ENCODE measurements at regions of chr1 and their contacts with region 1.

Region 1: DNA sequence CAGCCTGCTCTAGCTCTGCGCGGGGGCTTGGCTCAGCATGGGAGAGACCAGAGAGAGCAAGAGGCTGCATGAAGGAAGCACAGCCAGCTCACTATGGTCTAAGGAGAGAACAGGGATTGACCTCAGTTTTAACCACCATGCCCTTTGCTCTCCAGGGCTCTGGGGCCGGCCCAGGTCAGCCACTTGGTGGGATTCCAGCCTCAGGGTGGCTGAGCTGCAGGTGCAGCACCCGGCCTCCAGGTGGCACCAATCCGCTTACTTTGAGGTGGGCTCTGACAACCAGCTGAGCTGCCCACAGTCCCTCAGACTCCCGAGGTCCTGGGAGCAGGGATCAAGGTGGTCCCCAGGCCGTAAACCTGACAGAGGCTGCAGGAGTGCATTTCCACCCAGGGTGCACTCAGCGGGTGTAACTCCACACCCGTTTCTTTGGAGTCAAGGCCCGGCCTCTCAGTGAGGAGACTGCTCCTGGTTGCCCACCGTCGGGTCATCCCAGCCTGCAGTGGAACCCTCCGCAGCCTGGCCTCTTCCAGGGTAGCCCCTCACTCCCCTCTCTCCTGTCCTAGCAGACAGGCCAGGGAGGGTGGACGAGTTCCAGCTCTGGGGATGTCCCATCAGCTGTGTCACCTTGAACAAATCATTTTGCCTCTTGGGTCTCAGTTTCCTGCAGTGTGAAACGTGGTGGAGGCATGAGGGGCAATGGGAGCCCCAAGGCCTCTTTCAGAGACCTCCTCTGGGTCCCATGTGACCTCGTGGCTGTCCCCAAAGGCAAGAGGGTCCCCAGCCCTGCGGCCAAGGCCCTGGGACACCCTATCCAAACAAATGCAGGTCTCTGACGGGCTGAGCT is 607 bp upstream of the LGR6 start:
- DNase-seq: peak; percentile 69
- ATAC-seq: peak; percentile 54
- H3K4me3 Mint-ChIP-seq: no peak overlapping the region
- H3K27ac Mint-ChIP-seq: no peak overlapping the region
- H3K4me1 Mint-ChIP-seq: peaks cover 3% of the 10 kb centered on the region
- H3K27me3 Mint-ChIP-seq: peaks cover 33% of the 10 kb centered on the region

Region 2: DNA sequence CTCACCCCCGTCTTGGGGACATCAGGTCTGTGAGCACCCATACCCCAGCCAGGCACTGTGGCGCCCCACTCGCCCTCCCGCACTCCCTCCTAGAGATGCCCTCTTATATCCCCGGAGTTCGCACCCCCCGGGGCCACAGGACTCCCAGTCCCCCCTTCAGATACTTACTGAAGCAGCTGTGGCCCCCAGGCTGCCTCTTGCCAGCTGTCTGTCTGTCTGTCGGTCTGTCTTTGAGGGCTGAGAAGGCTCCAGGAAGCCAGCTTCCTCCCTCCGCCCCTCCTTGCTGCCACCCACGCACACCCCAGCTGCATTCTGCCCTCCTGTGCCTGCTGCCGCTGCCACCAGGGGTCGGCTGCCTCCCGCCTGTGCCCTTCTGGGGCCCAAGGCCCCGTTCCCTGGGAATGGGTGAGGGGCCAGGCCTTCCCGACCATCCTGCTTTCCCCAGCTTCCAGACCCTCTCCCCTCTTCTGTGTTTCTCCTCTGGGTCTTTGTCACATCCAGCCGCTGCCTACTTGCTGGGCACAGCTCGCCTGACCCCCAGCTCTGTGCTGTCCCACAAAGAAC is 32.5 kb before region 1 on chr1 and contains the start of gene PTPN7:
- CTCF ChIA-PET with region 1: interaction called, 28 read pairs
- DNase-seq: peak; percentile 87
- ATAC-seq: peak; percentile 38
- H3K4me3 Mint-ChIP-seq: peak within 1 kb of the TSS; percentile 98
- H3K27ac Mint-ChIP-seq: peak within 1 kb of the TSS; percentile 99
- H3K4me1 Mint-ChIP-seq: peaks cover 76% of the 10 kb centered on the region
- H3K27me3 Mint-ChIP-seq: no peaks in the 10 kb centered on the region
- total RNA-seq, gene PTPN7: 228 to 410 TPM

Region 3: DNA sequence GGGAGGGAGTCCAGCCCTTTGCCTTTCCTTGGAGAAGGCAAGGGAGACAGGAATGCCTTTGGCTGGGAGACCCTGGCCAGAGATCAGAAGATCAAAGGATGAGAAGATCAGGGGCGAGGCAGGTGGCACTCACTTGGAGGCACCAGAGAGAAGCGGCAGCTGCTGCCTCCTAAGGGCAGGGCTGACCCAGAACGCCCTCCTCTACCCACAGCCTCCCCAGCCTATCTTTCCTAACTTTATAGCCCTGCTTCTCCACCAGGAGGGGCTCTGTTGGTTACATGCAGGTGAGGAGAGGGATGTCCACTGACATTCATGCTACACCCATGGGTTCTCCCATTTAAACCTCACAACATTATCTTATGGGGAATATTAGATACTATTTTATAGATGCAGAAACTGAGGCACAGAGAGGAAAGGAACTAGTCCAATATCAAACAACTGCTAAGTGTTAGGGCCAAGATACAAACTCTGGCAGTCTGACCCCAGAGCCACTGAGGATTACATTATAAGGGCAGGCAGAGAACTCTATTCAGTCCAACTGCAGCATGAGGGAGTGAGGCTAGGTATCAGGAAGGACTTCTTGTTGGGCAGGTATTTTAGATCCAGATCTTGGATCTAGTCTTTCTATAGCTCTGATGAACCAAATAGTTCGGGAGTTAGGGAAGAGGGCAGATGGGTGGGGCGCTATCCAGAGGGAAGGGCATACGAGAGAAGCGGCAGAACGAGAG is 20.5 kb after region 1 on chr1:
- CTCF ChIA-PET with region 1: interaction called, 15 read pairs
- DNase-seq: no peak
- ATAC-seq: no peak
- H3K4me3 Mint-ChIP-seq: no peak overlapping the region
- H3K27ac Mint-ChIP-seq: no peak overlapping the region
- H3K4me1 Mint-ChIP-seq: peaks cover 5% of the 10 kb centered on the region
- H3K27me3 Mint-ChIP-seq: peaks cover 66% of the 10 kb centered on the region

Region 4: GRCh38 chr1:202274611-202275010 is 81.6 kb after region 1 on chr1:
- CTCF ChIA-PET with region 1: interaction called, 20 read pairs
- DNase-seq: peak; percentile 71
- ATAC-seq: peak; percentile 76
- H3K4me3 Mint-ChIP-seq: no peak overlapping the region
- H3K27ac Mint-ChIP-seq: no peak overlapping the region
- H3K4me1 Mint-ChIP-seq: peaks cover 3% of the 10 kb centered on the region
- H3K27me3 Mint-ChIP-seq: peaks cover 13% of the 10 kb centered on the region

Region 5: GRCh38 chr1:202315576-202316168 is 122.7 kb after region 1 on chr1:
- CTCF ChIA-PET with region 1: interaction called, 50 read pairs
- DNase-seq: peak; percentile 84
- ATAC-seq: peak; percentile 86
- H3K4me3 Mint-ChIP-seq: no peak overlapping the region
- H3K27ac Mint-ChIP-seq: no peak overlapping the region
- H3K4me1 Mint-ChIP-seq: peaks cover 20% of the 10 kb centered on the region
- H3K27me3 Mint-ChIP-seq: peaks cover 17% of the 10 kb centered on the region

Region 6: DNA sequence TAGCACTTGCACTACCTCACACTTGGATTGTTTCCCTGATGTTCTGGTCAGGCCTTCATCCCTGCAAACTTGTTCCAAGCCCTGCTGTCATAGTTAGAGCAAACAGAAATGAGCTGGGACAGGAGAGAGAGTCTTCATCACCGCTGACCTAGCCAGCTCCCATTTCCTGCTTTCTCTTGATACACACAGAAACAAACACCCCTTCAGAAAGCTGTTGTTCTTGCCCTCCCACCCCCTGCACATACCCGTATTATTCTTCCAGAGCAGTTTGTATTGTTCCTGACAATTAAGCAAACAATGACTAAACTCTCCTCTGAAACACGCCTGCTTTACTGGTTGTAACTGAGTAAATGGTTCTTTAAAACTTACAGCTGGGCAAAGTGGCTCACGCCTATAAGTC is 520.1 kb after region 1 on chr1:
- CTCF ChIA-PET with region 1: interaction called, 26 read pairs
- DNase-seq: no peak
- ATAC-seq: no peak
- H3K4me3 Mint-ChIP-seq: no peak overlapping the region
- H3K27ac Mint-ChIP-seq: no peak overlapping the region
- H3K4me1 Mint-ChIP-seq: no peaks in the 10 kb centered on the region
- H3K27me3 Mint-ChIP-seq: peaks cover 72% of the 10 kb centered on the region

Measured in activated CD8-positive, alpha-beta memory T cell treated with anti-CD3 and anti-CD28 coated beads, Interleukin-2, amount 10 ng/mL, durations not matched to agents 7 days and 5 days (primary cell).